Activated CD8-positive, alpha-beta T cell treated with anti-CD3 and anti-CD28 coated beads for 36 hours (primary cell): ENCODE measurements at regions of chr11 and their contacts with region 1.

Region 1: DNA sequence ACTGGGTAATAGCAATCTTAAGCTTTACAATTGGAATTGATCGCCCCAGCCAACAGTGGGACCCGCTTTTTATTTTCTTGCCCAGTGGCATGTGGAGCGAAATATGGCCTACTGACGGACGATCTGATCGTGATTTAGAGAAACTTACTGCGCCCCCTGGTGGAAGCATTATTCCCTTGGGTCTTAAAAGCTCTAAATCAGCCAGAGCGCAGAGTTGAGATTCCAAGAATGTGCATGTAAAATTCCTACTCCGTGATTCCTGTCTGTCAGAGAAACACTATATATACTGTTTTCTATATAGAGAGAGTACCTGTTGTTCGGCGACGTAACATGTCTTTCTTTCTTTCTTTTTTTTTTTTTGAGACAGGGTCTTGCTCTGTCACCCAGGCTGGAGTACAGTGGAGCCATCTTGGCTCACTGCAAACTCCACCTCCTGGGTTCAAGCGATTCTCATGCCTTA is 3.7 kb upstream of the DPF2 start:
- DNase-seq: peak; percentile 97
- ATAC-seq: peak; percentile 24
- H3K4me3 Mint-ChIP-seq: peak overlapping the region; percentile 3
- H3K27ac Mint-ChIP-seq: no peak overlapping the region
- H3K4me1 Mint-ChIP-seq: peaks cover 12% of the 10 kb centered on the region
- H3K27me3 Mint-ChIP-seq: no peaks in the 10 kb centered on the region
- CTCF ChIP-seq: peak; percentile 92

Region 2: DNA sequence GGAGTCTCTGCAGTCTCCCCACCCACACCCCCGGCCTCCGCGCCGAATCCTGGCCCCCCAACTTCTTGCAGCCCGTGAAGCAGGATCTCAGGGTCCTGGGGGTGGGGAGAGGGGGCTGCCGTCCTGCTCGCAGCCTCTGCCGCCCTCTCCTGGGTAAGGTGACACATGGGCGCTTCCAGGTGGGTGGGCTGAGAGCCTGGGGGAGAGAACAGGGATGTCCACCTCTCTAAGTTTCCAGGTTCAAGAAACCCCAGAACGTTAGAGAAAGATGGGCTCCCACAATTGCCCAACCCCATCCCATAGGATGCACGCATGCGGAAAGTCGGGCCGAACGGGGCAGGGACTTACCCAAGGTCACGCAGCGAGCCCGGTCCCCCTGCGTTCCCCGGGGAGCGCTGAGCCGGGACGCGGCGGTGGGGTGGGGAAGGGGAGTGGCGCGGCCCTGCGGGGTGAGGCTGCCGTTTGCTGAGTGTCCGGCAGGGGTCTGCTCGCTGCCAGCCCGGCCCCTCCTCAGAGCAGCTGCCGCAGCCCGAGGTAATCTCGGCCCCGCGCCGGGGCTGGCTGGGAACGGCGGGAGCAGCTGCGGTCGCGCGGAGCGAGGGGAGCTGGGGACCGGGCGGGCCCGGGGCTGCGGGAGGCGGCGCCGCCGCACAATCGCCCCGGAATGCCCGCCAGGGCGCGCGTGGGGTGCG is 149.0 kb before region 1 on chr11:
- CTCF ChIA-PET with region 1: interaction called, 12 read pairs
- POLR2A ChIA-PET with region 1: interaction called, 4 read pairs
- intact Hi-C with region 1: no loop called
- DNase-seq: peak; percentile 63
- ATAC-seq: peak; percentile 76
- H3K4me3 Mint-ChIP-seq: peak overlapping the region; percentile 80
- H3K27ac Mint-ChIP-seq: peak overlapping the region; percentile 81
- H3K4me1 Mint-ChIP-seq: peaks cover 17% of the 10 kb centered on the region
- H3K27me3 Mint-ChIP-seq: no peaks in the 10 kb centered on the region
- CTCF ChIP-seq: peak; percentile 63

Region 3: GRCh38 chr11:65219930-65220213 is 110.1 kb before region 1 on chr11:
- CTCF ChIA-PET with region 1: interaction called, 34 read pairs
- POLR2A ChIA-PET with region 1: interaction called, 4 read pairs
- intact Hi-C with region 1: no loop called
- DNase-seq: no peak
- ATAC-seq: no peak
- H3K4me3 Mint-ChIP-seq: no peak overlapping the region
- H3K27ac Mint-ChIP-seq: no peak overlapping the region
- H3K4me1 Mint-ChIP-seq: peaks cover 14% of the 10 kb centered on the region
- H3K27me3 Mint-ChIP-seq: peaks cover 3% of the 10 kb centered on the region
- CTCF ChIP-seq: no peak

Region 4: GRCh38 chr11:65251476-65251875 is 78.5 kb before region 1 on chr11:
- CTCF ChIA-PET with region 1: interaction called, 15 read pairs
- POLR2A ChIA-PET with region 1: no interaction called
- intact Hi-C with region 1: no loop called
- DNase-seq: no peak
- ATAC-seq: no peak
- H3K4me3 Mint-ChIP-seq: no peak overlapping the region
- H3K27ac Mint-ChIP-seq: no peak overlapping the region
- H3K4me1 Mint-ChIP-seq: no peaks in the 10 kb centered on the region
- H3K27me3 Mint-ChIP-seq: peaks cover 7% of the 10 kb centered on the region
- CTCF ChIP-seq: no peak

Region 5: GRCh38 chr11:65274735-65275682 is 55.0 kb before region 1 on chr11:
- CTCF ChIA-PET with region 1: interaction called, 38 read pairs
- POLR2A ChIA-PET with region 1: interaction called, 3 read pairs
- intact Hi-C with region 1: no loop called
- DNase-seq: peak; percentile 40
- ATAC-seq: peak; percentile 45
- H3K4me3 Mint-ChIP-seq: no peak overlapping the region
- H3K27ac Mint-ChIP-seq: no peak overlapping the region
- H3K4me1 Mint-ChIP-seq: peaks cover 12% of the 10 kb centered on the region
- H3K27me3 Mint-ChIP-seq: no peaks in the 10 kb centered on the region
- CTCF ChIP-seq: peak; percentile 64

Region 6: GRCh38 chr11:65340226-65340625 is 10.3 kb after region 1 on chr11:
- CTCF ChIA-PET with region 1: interaction called, 23 read pairs
- POLR2A ChIA-PET with region 1: interaction called, 3 read pairs
- intact Hi-C with region 1: no loop called
- DNase-seq: no peak
- ATAC-seq: no peak
- H3K4me3 Mint-ChIP-seq: no peak overlapping the region
- H3K27ac Mint-ChIP-seq: peak overlapping the region; percentile 39
- H3K4me1 Mint-ChIP-seq: peaks cover 23% of the 10 kb centered on the region
- H3K27me3 Mint-ChIP-seq: no peaks in the 10 kb centered on the region
- CTCF ChIP-seq: no peak